Psoas muscle (tissue), 8 donors: ENCODE measurements at regions of chr16 and their contacts with region 1.

Region 1: DNA sequence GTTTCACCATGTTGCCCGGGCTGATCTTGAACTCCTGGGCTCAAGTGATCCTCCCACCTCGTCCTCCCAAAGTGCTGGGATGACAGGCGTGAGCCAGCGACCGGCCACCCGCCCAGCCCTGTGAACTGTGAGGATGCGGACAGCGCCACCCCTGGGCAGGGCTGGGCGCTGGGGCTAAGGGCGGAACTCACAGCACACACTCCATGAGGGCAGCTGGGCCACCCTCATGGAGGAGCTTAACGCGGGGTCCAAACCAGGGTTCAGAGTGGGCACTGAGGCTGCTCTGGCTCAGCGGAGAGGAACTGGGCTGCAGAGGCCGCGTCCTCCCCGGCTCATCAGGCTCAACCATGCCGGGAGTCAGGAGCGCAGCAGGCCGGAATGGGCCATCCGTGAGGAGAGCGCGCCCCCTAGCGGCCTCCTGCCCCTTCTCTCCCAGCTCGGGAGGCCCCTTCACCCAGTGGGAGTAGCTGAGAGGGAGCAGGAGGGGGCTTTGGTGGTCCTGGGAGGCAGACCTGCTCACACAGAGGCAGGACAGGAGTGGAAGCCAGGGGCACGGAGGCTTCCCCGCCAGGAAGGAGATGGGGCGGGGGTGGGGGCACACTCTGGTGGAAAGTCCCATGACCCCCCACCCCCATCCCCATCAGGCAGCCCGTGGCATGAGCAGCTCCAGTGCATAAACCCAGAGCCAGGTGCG is 13.8 kb downstream of the CORO7 start:
- DNase-seq: peak; percentile 85 to 91
- ATAC-seq: peak; percentile 93 to 98 (median 96)
- H3K4me3 ChIP-seq: no peak overlapping the region
- H3K27ac ChIP-seq: no peak overlapping the region
- H3K4me1 ChIP-seq: peaks cover 3% of the 10 kb centered on the region
- H3K27me3 ChIP-seq: no peaks in the 10 kb centered on the region
- CTCF ChIP-seq: peak; percentile 93

Region 2: GRCh38 chr16:4288148-4288921 is 114.3 kb before region 1 on chr16:
- intact Hi-C with region 1: loop called (anchors 10 kb)
- DNase-seq: peak; percentile 78 to 88
- ATAC-seq: peak; percentile 59 to 75 (median 67)
- H3K4me3 ChIP-seq: peak overlapping the region; percentile 15
- H3K27ac ChIP-seq: no peak overlapping the region
- H3K4me1 ChIP-seq: peaks cover 45% of the 10 kb centered on the region
- H3K27me3 ChIP-seq: peaks cover 0 to 5% (median 0%) of the 10 kb centered on the region in 3 donors
- CTCF ChIP-seq: peak; percentile 91

Region 3: DNA sequence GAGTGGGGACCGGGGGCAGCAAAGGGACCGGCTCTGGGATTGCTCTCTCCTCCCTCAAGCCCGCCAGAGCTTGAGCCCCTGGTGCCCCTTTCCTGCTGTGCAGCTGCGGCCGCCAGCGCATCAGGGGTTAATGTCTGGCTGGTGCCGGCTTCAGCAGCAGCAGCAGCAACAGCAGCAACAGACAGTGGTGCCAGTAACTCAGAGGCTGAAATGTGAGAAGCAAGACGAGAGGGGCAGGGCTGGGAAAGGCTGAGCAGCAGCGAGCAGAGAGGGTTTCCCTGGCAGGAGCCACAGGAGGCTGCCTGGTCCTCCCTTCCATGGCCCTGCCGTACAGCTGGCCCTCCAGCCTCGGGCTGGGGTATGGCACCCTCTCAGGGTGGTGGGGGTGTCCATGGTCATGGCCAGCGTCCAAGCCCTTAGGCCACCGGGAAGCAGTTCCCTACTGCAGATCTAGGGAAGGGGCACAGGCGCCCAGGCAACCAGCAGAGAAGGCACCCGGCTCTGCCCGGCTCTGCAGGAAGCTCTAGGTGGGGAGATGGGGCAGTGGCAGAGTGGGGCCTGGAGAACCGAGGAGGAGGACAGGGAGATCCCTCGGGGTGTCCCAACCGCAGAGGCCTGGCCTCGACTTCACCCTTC is 108.6 kb before region 1 on chr16:
- intact Hi-C with region 1: loop called (anchors 10 kb)
- DNase-seq: peak; percentile 59 to 80
- ATAC-seq: peak; percentile 84 to 89 (median 86)
- H3K4me3 ChIP-seq: peak overlapping the region; percentile 45
- H3K27ac ChIP-seq: peak overlapping the region; percentile 68
- H3K4me1 ChIP-seq: peaks cover 52% of the 10 kb centered on the region
- H3K27me3 ChIP-seq: no peaks in the 10 kb centered on the region
- CTCF ChIP-seq: no peak

Region 4: DNA sequence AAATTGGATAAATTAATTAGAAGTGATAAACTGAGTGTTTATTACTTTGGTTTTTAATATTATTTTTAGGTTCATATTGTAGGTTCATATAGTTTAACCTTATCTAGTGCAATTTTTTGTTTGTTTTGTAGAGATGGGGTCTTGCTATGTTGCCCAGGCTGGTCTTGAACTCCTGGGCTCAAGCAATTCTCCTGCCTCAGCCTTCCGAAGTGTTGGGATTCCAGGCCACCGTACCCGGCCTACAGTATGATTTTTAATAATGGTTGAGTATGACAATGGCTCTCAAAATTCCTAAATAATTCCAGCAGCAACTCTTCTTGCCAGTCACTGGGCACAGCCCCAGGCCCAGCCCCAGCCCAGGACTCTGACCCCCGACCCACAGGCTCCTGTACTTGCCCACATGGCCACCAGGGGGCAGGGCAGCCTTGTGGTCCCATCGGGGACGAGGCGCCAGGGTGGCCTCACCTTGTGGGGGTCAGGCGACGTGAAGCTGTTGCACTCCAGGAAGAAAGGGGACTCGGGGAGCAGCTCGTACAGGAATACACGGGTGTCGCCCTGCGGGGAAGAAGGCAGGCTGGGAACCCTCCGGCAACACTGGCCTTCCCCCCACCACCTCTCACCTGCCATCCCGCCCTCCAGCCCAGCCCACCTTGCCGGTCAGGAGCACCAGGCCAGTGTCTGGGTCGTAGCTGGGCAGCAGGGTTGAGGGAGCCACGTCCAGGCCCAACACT is 43.6 kb before region 1 on chr16:
- intact Hi-C with region 1: loop called (anchors 1 kb)
- DNase-seq: peak; percentile 78 to 85
- ATAC-seq: peak; percentile 77 to 92 (median 86)
- H3K4me3 ChIP-seq: no peak overlapping the region
- H3K27ac ChIP-seq: no peak overlapping the region
- H3K4me1 ChIP-seq: no peaks in the 10 kb centered on the region
- H3K27me3 ChIP-seq: no peaks in the 10 kb centered on the region
- CTCF ChIP-seq: peak; percentile 98